Left cardiac atrium (tissue), 4 donors: ENCODE measurements at regions of chr2 and their contacts with region 1.

Region 1: DNA sequence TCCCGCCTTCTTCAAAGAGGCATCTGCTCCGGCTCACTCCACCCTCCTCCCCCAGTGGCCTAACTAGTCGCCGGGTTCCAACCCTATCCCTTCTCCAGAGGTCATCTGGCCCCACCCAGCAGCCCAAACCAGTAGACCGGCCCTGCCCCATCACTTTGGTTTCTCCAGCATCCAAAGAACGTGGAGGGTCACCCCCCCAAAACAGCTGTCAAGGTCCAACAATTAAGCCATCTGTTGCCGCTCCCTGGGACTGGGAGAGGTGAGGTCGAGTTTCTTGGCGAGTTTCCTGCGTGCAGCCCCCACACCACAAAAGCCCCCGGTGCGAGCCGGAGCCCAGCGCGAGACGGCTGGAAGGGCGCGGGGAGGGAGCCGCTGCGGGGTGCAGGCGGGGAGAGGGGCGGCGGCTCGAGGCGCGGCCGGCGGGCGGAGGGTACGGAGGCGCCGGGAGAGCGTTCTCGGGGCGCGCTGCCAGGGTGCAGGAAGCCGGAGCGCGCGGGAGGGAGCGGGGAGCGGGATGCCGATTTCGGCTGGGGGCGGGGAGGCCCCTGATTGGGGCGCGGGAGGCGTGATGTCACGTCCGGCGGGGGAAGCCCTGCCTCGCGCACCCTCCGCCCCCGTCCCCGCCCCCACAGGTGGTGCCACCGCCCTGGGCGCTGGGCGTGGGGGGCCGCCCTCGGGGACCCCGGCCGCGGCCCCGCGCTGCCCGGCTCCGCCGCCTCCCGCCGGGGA is 571 bp upstream of the GPC1 start:
- DNase-seq: peak; percentile 94
- ATAC-seq: peak; percentile 82 to 88

Region 2: DNA sequence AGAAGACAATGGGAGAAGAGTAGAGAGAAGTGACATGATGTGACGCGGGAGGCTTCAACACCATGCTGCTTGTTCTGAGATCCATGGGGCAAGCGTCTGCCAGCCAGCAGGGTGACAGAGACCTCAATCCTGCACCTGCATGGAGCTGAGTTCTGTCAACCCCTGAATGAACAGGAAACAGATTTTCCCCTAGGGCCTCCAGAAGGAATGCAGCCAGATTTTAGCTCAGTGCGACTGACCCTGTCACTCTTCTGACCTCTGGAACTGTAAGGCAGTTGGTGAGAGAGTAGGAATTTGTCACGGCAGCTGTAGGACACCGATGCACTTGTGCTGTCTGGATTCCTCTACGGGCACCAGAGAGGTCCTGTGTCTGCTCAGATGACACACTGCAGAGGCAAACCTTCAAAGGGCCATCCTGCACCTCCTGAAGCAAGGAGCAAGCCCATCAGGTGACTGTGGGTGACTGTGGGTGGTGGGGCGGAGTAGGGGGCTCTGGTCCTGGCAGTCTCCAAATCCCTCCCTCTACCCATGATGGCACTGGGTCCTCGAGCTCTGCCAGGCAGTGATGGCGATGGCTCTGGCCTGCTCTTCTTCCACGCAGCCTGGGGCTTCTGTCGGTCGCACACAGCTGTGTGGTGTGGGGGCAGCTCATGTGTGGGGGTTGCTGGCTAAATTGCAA is 1781.3 kb before region 1 on chr2:
- intact Hi-C with region 1: no loop called
- DNase-seq: no peak
- ATAC-seq: no peak

Region 3: GRCh38 chr2:240232961-240233893 is 201.7 kb before region 1 on chr2:
- intact Hi-C with region 1: loop called (anchors 1 to 2 kb)
- DNase-seq: peak; percentile 86
- ATAC-seq: peak; percentile 76 to 88

Region 4: GRCh38 chr2:240300261-240300821 is 134.6 kb before region 1 on chr2:
- intact Hi-C with region 1: loop called in 1 of 2 experiments (anchors 10 kb)
- DNase-seq: no peak
- ATAC-seq: no peak

Region 5: GRCh38 chr2:240387669-240388358 is 47.1 kb before region 1 on chr2:
- intact Hi-C with region 1: loop called in 1 of 2 experiments (anchors 10 kb)
- DNase-seq: peak; percentile 77
- ATAC-seq: peak; percentile 77 to 79